ENCODE measurements at regions of chr1 and their contacts with region 1.

Region 1: DNA sequence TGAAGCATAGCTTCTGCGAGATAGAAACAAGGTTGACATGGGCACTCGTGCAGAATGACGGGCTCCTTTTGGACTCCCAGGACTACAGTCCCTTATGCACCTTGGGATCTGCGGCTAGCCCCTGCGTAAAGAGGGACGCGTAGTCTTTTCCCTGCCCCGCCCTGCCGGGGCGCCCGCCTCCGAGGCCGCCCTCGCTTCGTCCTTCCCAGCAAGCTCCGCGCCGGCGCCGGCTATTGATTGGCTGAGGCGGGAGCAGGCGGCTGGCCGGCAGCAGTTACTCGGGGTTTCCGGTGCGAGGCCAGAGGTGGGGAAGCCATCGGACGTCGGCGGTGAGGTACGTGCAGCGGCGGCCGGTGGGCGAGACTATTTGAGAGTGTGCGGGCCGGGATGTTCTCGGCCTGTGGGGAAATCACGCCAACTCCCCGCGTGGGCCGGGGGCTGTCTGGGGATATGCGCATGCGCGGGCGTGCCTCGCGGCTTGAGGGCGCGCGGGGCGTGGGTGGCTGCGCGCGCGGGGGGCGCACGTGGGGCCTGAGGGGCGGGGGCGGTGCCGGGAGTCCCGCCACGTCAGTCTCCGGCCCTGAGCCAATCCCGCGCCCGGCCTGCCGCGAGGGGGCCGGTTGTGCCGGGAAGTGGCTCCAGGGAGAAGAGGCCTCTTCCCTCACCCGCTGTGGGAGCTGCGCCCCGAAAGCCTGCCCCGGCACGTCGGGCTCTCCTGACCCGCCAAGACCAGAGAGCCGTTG is at the start of gene TXLNA:
- DNase-seq: peak; percentile 94 to 96
- ATAC-seq: peak; percentile 94 to 97 (median 96)
- H3K4me3 ChIP-seq: peak within 1 kb of the TSS; percentile 42 to 80 (median 75)
- H3K27ac ChIP-seq: peak within 1 kb of the TSS; percentile 59 to 98 (median 96)
- H3K4me1 ChIP-seq: peaks cover 3 to 55% (median 33%) of the 10 kb centered on the region in 9 donors
- H3K27me3 ChIP-seq: no peaks in the 10 kb centered on the region
- CTCF ChIP-seq: peak in 4 of 9 donors; percentile 18 to 44 (median 34)
- total RNA-seq, gene TXLNA: 13.7 to 28.9 (median 17.3) TPM

Region 2: GRCh38 chr1:32107742-32108661 is 71.6 kb before region 1 on chr1 and contains the start of gene KPNA6:
- intact Hi-C with region 1: loop called in 2 of 10 experiments (anchors 5 to 10 kb)
- DNase-seq: peak; percentile 83 to 96
- ATAC-seq: peak; percentile 89 to 96 (median 92)
- H3K4me3 ChIP-seq: peak within 1 kb of the TSS; percentile 71 to 99 (median 96)
- H3K27ac ChIP-seq: peak within 1 kb of the TSS; percentile 68 to 96 (median 92)
- H3K4me1 ChIP-seq: peaks cover 3 to 53% (median 44%) of the 10 kb centered on the region in 9 donors
- H3K27me3 ChIP-seq: no peaks in the 10 kb centered on the region
- CTCF ChIP-seq: no peak
- total RNA-seq, gene KPNA6: 73.0 to 92.5 (median 82.6) TPM

Region 3: GRCh38 chr1:32142446-32143301 is 36.9 kb before region 1 on chr1:
- intact Hi-C with region 1: loop called in 1 of 10 experiments (anchors 2 kb)
- DNase-seq: peak; percentile 36 to 71
- ATAC-seq: peak; percentile 88 to 95 (median 94)
- H3K4me3 ChIP-seq: no peak overlapping the region
- H3K27ac ChIP-seq: peak overlapping the region in 8 of 10 donors; percentile 23 to 79 (median 56)
- H3K4me1 ChIP-seq: peaks cover 0 to 45% (median 24%) of the 10 kb centered on the region in 9 donors
- H3K27me3 ChIP-seq: no peaks in the 10 kb centered on the region
- CTCF ChIP-seq: no peak